ENCODE measurements at regions of chr5 and their contacts with region 1.

Region 1: GRCh38 chr5:110840347-110840960 is 101.6 kb downstream of the SLC25A46 start:
- DNase-seq: no peak
- H3K4me3 ChIP-seq: no peak overlapping the region
- H3K27ac ChIP-seq: no peak overlapping the region
- H3K4me1 ChIP-seq: peaks cover 17% of the 10 kb centered on the region
- H3K27me3 ChIP-seq: no peaks in the 10 kb centered on the region
- CTCF ChIP-seq: no peak
- POLR2A ChIP-seq: no peak

Region 2: GRCh38 chr5:110896901-110897300 is 56.4 kb after region 1 on chr5:
- intact Hi-C with region 1: loop called (anchors 2 kb)
- DNase-seq: no peak
- H3K4me3 ChIP-seq: no peak overlapping the region
- H3K27ac ChIP-seq: no peak overlapping the region
- H3K4me1 ChIP-seq: no peaks in the 10 kb centered on the region
- H3K27me3 ChIP-seq: no peaks in the 10 kb centered on the region
- CTCF ChIP-seq: no peak
- POLR2A ChIP-seq: no peak

Measured in vagina (tissue), 2 donors.